ENCODE measurements at regions of chr17 and their contacts with region 1.

Region 1: DNA sequence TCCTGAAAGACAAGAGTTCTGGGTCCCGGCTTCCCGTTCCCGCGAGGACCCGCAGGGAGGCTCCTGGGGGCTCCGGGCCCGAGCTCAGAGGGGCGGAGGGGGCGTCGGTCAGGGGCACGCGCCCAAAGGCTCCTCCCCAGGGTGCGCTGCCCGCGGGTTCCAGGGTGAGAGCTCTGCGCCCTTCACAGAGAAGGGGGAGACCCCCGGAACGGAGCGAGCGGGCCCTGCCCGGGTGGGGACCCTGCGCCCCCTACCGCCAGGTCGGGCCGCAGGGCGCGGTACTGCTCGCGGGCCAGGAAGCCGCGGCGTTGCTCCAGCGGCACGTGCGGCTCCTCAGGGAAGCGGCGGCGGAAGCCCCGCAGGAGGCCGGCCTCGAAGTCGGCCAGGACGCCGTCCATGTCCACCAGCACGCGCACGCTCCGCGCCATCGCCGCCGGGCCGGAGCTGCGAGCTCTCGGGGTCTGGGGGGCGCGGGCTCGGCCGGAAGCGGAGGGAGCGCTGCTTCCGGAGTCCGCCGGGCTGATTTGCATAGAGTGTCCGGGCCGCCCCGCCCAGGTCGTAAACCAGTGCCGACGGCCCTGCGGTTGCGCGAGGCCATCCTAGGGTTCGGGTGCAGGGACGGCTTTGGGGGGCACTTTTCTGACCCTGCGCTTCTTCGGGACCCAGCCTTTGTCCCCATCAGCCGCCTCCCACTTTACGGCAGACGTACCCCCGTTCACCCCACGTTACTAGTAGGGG is at the start of gene NT5C:
- DNase-seq: peak; percentile 66 to 83 (median 71)
- H3K4me3 ChIP-seq: peak within 1 kb of the TSS; percentile 64 to 88 (median 83)
- H3K27ac ChIP-seq: peak within 1 kb of the TSS; percentile 50 to 86
- H3K4me1 ChIP-seq: peaks cover 0 to 23% (median 17%) of the 10 kb centered on the region in 4 experiments
- H3K27me3 ChIP-seq: no peaks in the 10 kb centered on the region

Region 2: DNA sequence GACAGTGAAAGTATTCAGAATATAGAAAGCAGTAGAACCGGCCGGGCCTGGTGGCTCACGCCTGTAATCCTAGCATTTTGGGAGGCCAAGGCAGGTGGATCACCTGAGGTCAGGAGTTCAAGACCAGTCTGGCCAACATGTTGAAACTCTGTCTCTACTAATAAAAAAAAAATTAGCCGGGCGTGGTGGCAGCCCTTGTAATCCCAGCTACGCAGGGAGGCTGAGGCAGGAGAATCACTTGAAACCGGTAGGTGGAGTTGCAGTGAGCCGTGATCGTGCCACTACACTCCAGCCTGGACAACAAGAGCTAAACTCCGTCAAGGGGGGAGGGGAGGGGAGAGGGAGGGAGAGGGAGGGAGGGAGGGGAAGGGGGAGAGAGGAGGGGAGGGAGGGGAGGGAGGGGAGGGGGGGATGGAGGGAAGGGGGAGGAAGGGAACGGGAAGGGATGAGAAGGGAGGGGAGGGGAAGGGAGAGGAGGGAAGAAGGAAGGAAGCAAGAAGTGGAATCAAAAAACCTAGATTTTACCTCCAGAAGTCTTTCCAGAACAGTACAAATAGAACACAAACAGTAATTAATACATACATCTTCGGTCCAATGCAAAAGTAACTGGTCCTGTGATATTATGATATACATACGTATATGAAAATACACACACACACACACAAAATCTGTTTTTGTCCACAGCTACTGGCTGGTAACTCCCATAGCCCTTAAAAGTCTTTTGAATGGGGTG is 11.0 kb after region 1 on chr17:
- CTCF ChIA-PET with region 1: interaction called, 22 read pairs
- POLR2A ChIA-PET with region 1: interaction called, 3 read pairs
- DNase-seq: no peak
- H3K4me3 ChIP-seq: no peak overlapping the region
- H3K27ac ChIP-seq: no peak overlapping the region
- H3K4me1 ChIP-seq: peaks cover 0 to 8% (median 3%) of the 10 kb centered on the region in 4 experiments
- H3K27me3 ChIP-seq: no peaks in the 10 kb centered on the region

Region 3: GRCh38 chr17:75147878-75148546 is 16.6 kb after region 1 on chr17:
- CTCF ChIA-PET with region 1: interaction called, 22 read pairs
- POLR2A ChIA-PET with region 1: interaction called, 3 read pairs
- DNase-seq: no peak
- H3K4me3 ChIP-seq: no peak overlapping the region
- H3K27ac ChIP-seq: no peak overlapping the region
- H3K4me1 ChIP-seq: peaks cover 0 to 10% (median 6%) of the 10 kb centered on the region in 4 experiments
- H3K27me3 ChIP-seq: no peaks in the 10 kb centered on the region

Region 4: GRCh38 chr17:75207760-75208159 is 76.3 kb after region 1 on chr17:
- CTCF ChIA-PET with region 1: no interaction called
- POLR2A ChIA-PET with region 1: no interaction called
- DNase-seq: no peak
- H3K4me3 ChIP-seq: no peak overlapping the region
- H3K27ac ChIP-seq: no peak overlapping the region
- H3K4me1 ChIP-seq: peaks cover 6 to 17% (median 17%) of the 10 kb centered on the region in 4 experiments
- H3K27me3 ChIP-seq: no peaks in the 10 kb centered on the region